ENCODE measurements at regions of chr11 and their contacts with region 1.

Region 1: DNA sequence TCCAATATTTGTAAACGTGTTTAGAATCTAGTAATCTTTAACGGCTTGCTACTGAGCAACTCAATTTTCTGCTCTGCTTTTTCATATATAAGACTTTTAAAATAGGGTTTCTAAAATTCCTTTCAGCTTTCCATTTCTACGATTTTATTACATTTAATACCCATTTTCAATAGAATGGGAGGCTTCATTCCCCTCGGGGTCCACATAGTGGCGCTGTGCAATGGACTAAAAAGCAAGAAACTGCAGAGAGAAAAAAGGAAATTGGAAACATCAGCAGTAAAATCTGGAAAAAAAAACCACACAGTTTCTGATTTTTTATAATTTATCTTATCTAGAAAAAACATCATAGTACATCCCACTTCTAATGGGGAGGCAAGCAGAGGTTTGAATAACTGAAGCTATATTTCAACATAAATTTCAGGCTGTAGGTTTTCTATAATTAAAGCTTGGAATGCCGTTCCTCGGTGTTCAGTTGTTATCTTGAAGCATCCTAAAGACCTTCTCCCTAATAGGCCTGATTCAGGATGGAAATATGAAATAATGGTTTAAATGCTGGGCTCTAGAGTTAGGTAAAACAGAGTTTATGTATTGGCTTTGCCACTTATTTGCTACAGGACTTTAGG is 18.7 kb upstream of the JHY start:
- DNase-seq: peak; percentile 19 to 61 (median 40)
- H3K4me3 ChIP-seq: no peak overlapping the region
- H3K27ac ChIP-seq: no peak overlapping the region
- H3K4me1 ChIP-seq: no peaks in the 10 kb centered on the region
- H3K27me3 ChIP-seq: no peaks in the 10 kb centered on the region
- CTCF ChIP-seq: peak; percentile 26 to 67 (median 65)
- EP300 ChIP-seq: no peak
- POLR2A ChIP-seq: no peak

Region 2: DNA sequence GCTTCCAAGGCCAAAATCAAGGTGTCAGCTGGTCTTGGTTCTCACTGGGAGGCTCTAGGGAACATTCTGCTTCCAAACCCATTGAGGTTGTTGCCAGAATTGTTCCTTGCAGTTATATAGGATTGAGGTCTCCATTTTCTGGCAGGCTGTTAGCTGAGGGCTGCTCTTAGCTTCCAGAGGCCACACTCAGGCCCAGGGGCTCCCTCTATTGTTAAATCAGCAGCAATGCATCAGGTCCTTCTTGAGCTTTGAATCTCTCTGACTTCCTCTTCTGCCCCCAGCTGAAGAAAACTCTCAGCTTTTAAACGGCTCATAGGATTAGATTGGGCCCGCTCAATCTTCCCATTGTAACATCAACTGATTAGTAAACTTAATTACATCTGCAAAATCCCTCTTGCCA is 157.2 kb after region 1 on chr11:
- intact Hi-C with region 1: loop called in 1 of 4 experiments (anchors 5 kb)
- DNase-seq: no peak
- H3K4me3 ChIP-seq: no peak overlapping the region
- H3K27ac ChIP-seq: no peak overlapping the region
- H3K4me1 ChIP-seq: no peaks in the 10 kb centered on the region
- H3K27me3 ChIP-seq: no peaks in the 10 kb centered on the region
- CTCF ChIP-seq: no peak
- EP300 ChIP-seq: no peak
- POLR2A ChIP-seq: no peak

Region 3: GRCh38 chr11:123054301-123055065 is 190.7 kb after region 1 on chr11:
- intact Hi-C with region 1: loop called in 1 of 4 experiments (anchors 10 kb)
- DNase-seq: no peak
- H3K4me3 ChIP-seq: no peak overlapping the region
- H3K27ac ChIP-seq: no peak overlapping the region
- H3K4me1 ChIP-seq: peaks cover under 1% of the 10 kb centered on the region
- H3K27me3 ChIP-seq: no peaks in the 10 kb centered on the region
- CTCF ChIP-seq: peak; percentile 34 to 58 (median 52)
- EP300 ChIP-seq: no peak
- POLR2A ChIP-seq: no peak

Measured in ovary (tissue), 10 donors.